ENCODE measurements at regions of chr3 and their contacts with region 1.

Region 1: GRCh38 chr3:113730550-113730949 is 15.5 kb downstream of the NAA50 start:
- DNase-seq: no peak
- ATAC-seq: no peak
- H3K4me3 ChIP-seq: no peak overlapping the region
- H3K27ac ChIP-seq: no peak overlapping the region
- H3K4me1 ChIP-seq: peaks cover 5% of the 10 kb centered on the region; the same call in 1 of the 3 replicates
- CTCF ChIP-seq: no peak
- EP300 ChIP-seq: no peak
- POLR2A ChIP-seq: no peak
- RAD21 ChIP-seq: no peak

Region 2: GRCh38 chr3:113614402-113614801 is 116.1 kb before region 1 on chr3:
- CTCF ChIA-PET with region 1: no interaction called
- POLR2A ChIA-PET with region 1: no interaction called
- DNase-seq: no peak
- ATAC-seq: no peak
- H3K4me3 ChIP-seq: no peak overlapping the region
- H3K27ac ChIP-seq: no peak overlapping the region
- H3K4me1 ChIP-seq: no peaks in the 10 kb centered on the region
- CTCF ChIP-seq: no peak
- EP300 ChIP-seq: no peak
- POLR2A ChIP-seq: no peak
- RAD21 ChIP-seq: no peak

Region 3: GRCh38 chr3:113707835-113708234 is 22.7 kb before region 1 on chr3:
- CTCF ChIA-PET with region 1: no interaction called
- POLR2A ChIA-PET with region 1: no interaction called
- DNase-seq: no peak
- ATAC-seq: no peak
- H3K4me3 ChIP-seq: no peak overlapping the region
- H3K27ac ChIP-seq: no peak overlapping the region
- H3K4me1 ChIP-seq: peaks cover 7% of the 10 kb centered on the region; the same call in 2 of the 3 replicates
- CTCF ChIP-seq: no peak
- EP300 ChIP-seq: no peak
- POLR2A ChIP-seq: no peak
- RAD21 ChIP-seq: no peak

Region 4: GRCh38 chr3:113745273-113746068 is 14.9 kb after region 1 on chr3:
- CTCF ChIA-PET with region 1: interaction called, 38 read pairs
- POLR2A ChIA-PET with region 1: interaction called, 4 read pairs
- DNase-seq: peak; percentile 88 to 95
- ATAC-seq: peak; percentile 80 to 88
- H3K4me3 ChIP-seq: peak overlapping the region; percentile 70
- H3K27ac ChIP-seq: peak overlapping the region; percentile 96 to 99
- H3K4me1 ChIP-seq: peaks cover 40% of the 10 kb centered on the region
- CTCF ChIP-seq: peak; percentile 70
- EP300 ChIP-seq: no peak
- POLR2A ChIP-seq: no peak
- RAD21 ChIP-seq: peak; percentile 61 to 70

Region 5: DNA sequence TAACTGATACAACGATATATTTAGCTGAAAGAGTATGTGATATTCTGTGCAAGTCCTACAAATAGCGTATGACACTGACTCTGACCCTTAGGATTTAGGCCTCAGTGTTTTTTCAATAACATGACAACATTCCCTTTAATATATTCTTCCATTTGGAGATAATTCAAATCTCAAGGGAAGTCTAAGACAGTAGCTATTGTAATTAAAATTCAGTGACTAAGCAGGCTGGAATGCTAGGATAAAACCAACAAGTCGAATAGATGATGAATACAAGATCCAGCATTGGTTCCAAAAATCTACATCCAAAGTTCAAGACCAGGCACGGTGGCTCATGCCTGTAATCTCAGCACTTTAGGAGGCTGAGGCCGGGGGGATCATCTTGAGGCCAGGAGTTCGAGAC is 382.1 kb after region 1 on chr3:
- CTCF ChIA-PET with region 1: no interaction called
- POLR2A ChIA-PET with region 1: no interaction called
- DNase-seq: no peak
- ATAC-seq: no peak
- H3K4me3 ChIP-seq: no peak overlapping the region
- H3K27ac ChIP-seq: no peak overlapping the region
- H3K4me1 ChIP-seq: no peaks in the 10 kb centered on the region
- CTCF ChIP-seq: no peak
- EP300 ChIP-seq: no peak
- POLR2A ChIP-seq: no peak
- RAD21 ChIP-seq: no peak

Measured in A549 (cell line).